CD8-positive, alpha-beta memory T cell (primary cell): ENCODE measurements at regions of chr12 and their contacts with region 1.

Region 1: DNA sequence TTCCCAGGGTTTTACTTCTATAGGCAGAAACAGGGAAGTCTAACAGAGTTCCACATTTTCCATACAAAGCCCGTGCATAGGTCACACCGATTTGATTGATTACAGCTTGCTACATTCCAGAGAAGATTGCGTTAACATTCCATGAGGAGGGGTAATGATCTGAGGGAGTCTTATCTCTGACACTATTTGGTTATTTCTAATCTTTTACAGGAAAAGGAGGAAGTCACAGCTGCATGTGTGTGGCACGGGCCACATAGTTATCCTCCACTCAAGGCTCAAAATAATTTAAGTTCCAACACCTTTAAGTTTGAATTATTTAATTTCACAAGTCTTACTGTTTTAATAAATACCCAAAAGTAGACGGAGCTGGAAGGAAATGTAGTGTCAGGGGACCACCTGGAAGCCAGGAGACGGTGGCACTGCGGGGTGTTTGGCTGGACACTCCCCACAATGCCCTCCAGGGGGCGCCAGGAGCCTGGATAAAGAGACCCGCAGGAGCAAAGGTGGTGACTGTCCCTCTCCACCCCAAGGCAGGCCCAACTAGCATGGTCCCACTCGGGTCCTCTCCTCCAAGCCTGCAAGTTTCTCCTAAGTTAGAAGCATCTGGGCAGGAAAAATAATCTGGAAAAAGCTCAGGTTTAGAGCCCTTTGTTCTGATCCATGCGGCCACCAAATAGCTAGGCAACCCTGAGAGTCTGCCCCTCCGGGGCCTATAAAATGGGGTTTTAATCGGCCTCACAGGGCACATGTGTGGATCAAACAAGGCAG is 20.2 kb downstream of the KRT8 start:
- DNase-seq: peak; percentile 57 to 81 (median 68)
- H3K4me3 ChIP-seq: no peak overlapping the region
- H3K4me3 Mint-ChIP-seq: no peak overlapping the region
- H3K27ac ChIP-seq: no peak overlapping the region
- H3K27ac Mint-ChIP-seq: no peak overlapping the region
- H3K4me1 ChIP-seq: peaks cover 4% of the 10 kb centered on the region
- H3K4me1 Mint-ChIP-seq: peaks cover 6 to 8% (median 7%) of the 10 kb centered on the region in 3 donors
- H3K27me3 ChIP-seq: no peaks in the 10 kb centered on the region
- H3K27me3 Mint-ChIP-seq: peaks cover 15 to 28% of the 10 kb centered on the region in 2 donors

Region 2: DNA sequence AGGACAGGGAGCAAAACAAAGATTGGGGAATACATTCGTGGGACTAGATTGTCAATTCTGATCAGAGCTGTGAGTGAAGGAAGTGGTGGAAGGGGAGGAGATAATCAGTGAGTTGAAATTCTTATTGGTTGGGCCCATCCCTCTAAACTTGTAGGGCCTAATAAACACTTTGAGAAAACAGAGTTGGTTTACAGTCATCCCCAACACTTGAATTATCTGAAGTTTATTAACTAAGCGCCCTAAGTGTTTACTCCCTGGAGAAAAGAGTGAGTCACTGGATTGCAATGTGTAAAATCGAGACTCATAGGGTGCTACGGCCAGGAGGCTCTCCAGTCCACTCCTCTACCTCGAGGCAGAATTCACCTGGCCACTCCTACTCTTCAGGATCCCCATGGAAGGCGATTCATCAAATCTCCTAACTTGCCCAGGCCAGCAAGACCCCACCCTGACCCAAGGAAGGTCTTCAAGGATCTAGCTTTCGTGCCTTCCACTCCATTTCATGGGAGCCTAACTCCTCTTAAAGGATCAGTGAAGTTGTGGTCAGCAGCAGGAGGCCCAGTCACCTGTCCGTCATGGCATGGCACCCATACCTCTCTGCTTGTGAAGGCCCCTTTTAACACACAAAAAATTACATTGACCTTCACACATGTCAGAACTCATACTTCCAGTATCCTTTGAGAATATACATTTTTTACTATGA is 85.5 kb before region 1 on chr12:
- CTCF ChIA-PET with region 1: no interaction called
- POLR2A ChIA-PET with region 1: no interaction called
- DNase-seq: no peak
- H3K4me3 ChIP-seq: no peak overlapping the region
- H3K4me3 Mint-ChIP-seq: no peak overlapping the region
- H3K27ac ChIP-seq: no peak overlapping the region
- H3K27ac Mint-ChIP-seq: no peak overlapping the region
- H3K4me1 ChIP-seq: no peaks in the 10 kb centered on the region
- H3K4me1 Mint-ChIP-seq: no peaks in the 10 kb centered on the region
- H3K27me3 ChIP-seq: no peaks in the 10 kb centered on the region
- H3K27me3 Mint-ChIP-seq: peaks cover 3 to 4% of the 10 kb centered on the region in 2 donors

Region 3: GRCh38 chr12:52850681-52851080 is 34.0 kb before region 1 on chr12:
- CTCF ChIA-PET with region 1: no interaction called
- POLR2A ChIA-PET with region 1: no interaction called
- DNase-seq: peak in 1 of 5 donors; percentile 39
- H3K4me3 ChIP-seq: no peak overlapping the region
- H3K4me3 Mint-ChIP-seq: no peak overlapping the region
- H3K27ac ChIP-seq: no peak overlapping the region
- H3K27ac Mint-ChIP-seq: no peak overlapping the region
- H3K4me1 ChIP-seq: no peaks in the 10 kb centered on the region
- H3K4me1 Mint-ChIP-seq: no peaks in the 10 kb centered on the region
- H3K27me3 ChIP-seq: no peaks in the 10 kb centered on the region
- H3K27me3 Mint-ChIP-seq: peaks cover 9 to 46% of the 10 kb centered on the region in 2 donors

Region 4: GRCh38 chr12:52870351-52871290 is 14.1 kb before region 1 on chr12:
- CTCF ChIA-PET with region 1: interaction called, 37 read pairs
- POLR2A ChIA-PET with region 1: no interaction called
- DNase-seq: peak; percentile 59 to 83 (median 69)
- H3K4me3 ChIP-seq: no peak overlapping the region
- H3K4me3 Mint-ChIP-seq: no peak overlapping the region
- H3K27ac ChIP-seq: no peak overlapping the region
- H3K27ac Mint-ChIP-seq: peak overlapping the region in 5 of 8 donors; percentile 6 to 77 (median 43)
- H3K4me1 ChIP-seq: peaks cover 28% of the 10 kb centered on the region
- H3K4me1 Mint-ChIP-seq: peaks cover 21 to 33% (median 33%) of the 10 kb centered on the region in 3 donors
- H3K27me3 ChIP-seq: no peaks in the 10 kb centered on the region
- H3K27me3 Mint-ChIP-seq: no peaks in the 10 kb centered on the region

Region 5: GRCh38 chr12:52895061-52895887 is 10.6 kb after region 1 on chr12:
- CTCF ChIA-PET with region 1: interaction called, 38 read pairs
- POLR2A ChIA-PET with region 1: no interaction called
- DNase-seq: no peak
- H3K4me3 ChIP-seq: no peak overlapping the region
- H3K4me3 Mint-ChIP-seq: no peak overlapping the region
- H3K27ac ChIP-seq: no peak overlapping the region
- H3K27ac Mint-ChIP-seq: no peak overlapping the region
- H3K4me1 ChIP-seq: no peaks in the 10 kb centered on the region
- H3K4me1 Mint-ChIP-seq: no peaks in the 10 kb centered on the region
- H3K27me3 ChIP-seq: no peaks in the 10 kb centered on the region
- H3K27me3 Mint-ChIP-seq: peaks cover 8 to 9% of the 10 kb centered on the region in 2 donors

Region 6: GRCh38 chr12:52949413-52950331 is 65.0 kb after region 1 on chr12:
- CTCF ChIA-PET with region 1: interaction called, 12 read pairs
- POLR2A ChIA-PET with region 1: no interaction called
- DNase-seq: no peak
- H3K4me3 ChIP-seq: peak overlapping the region; percentile 46
- H3K4me3 Mint-ChIP-seq: peak overlapping the region; percentile 60 to 88 (median 70)
- H3K27ac ChIP-seq: peak overlapping the region; percentile 78
- H3K27ac Mint-ChIP-seq: peak overlapping the region in 4 of 8 donors; percentile 33 to 71 (median 42)
- H3K4me1 ChIP-seq: peaks cover 7% of the 10 kb centered on the region
- H3K4me1 Mint-ChIP-seq: peaks cover 4 to 9% (median 4%) of the 10 kb centered on the region in 3 donors
- H3K27me3 ChIP-seq: no peaks in the 10 kb centered on the region
- H3K27me3 Mint-ChIP-seq: peaks cover 10 to 17% of the 10 kb centered on the region in 2 donors